Activated CD4-positive, alpha-beta T cell treated with anti-CD3 and anti-CD28 coated beads for 36 hours (primary cell): ENCODE measurements at regions of chr10 and their contacts with region 1.

Region 1: DNA sequence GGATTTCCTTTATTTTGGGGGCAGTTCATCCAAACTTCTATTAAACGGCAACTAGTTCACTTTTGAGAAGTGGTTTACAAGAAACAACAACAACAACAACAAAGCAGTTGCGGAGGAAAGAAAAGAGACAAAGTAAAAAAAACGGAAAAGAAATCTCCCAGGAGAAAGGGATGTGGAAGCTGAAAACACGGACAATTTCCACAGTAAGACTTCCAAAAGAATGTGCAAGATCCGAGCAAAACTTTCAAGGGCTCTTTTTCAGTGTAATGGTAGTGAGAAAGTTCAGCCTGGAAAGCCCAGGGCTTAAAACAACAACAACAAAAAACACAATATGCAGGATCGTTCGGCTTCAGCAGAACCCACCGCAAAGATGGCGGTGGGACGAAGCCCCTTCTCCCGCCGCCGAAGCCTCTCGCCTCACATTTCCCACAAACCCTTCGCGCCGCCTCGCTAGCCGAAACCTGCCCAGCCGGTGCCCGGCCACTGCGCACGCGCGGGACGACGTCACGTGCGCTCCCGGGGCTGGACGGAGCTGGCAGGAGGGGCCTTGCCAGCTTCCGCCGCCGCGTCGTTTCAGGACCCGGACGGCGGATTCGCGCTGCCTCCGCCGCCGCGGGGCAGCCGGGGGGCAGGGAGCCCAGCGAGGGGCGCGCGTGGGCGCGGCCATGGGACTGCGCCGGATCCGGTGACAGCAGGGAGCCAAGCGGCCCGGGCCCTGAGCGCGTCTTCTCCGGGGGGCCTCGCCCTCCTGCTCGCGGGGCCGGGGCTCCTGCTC is at the start of gene TNKS2:
- DNase-seq: peak; percentile 96
- ATAC-seq: peak; percentile 64
- H3K4me3 Mint-ChIP-seq: peak within 1 kb of the TSS; percentile 94
- H3K27ac Mint-ChIP-seq: peak within 1 kb of the TSS; percentile 99
- H3K4me1 Mint-ChIP-seq: peaks cover 50% of the 10 kb centered on the region
- H3K27me3 Mint-ChIP-seq: no peaks in the 10 kb centered on the region
- total RNA-seq, gene TNKS2: 32.0 to 35.7 TPM

Region 2: GRCh38 chr10:90179696-90180407 is 1618.2 kb before region 1 on chr10:
- CTCF ChIA-PET with region 1: no interaction called
- POLR2A ChIA-PET with region 1: no interaction called
- intact Hi-C with region 1: no loop called
- DNase-seq: no peak
- ATAC-seq: no peak
- H3K4me3 Mint-ChIP-seq: no peak overlapping the region
- H3K27ac Mint-ChIP-seq: no peak overlapping the region
- H3K4me1 Mint-ChIP-seq: no peaks in the 10 kb centered on the region
- H3K27me3 Mint-ChIP-seq: no peaks in the 10 kb centered on the region

Region 3: GRCh38 chr10:90905925-90906324 is 892.1 kb before region 1 on chr10:
- CTCF ChIA-PET with region 1: no interaction called
- POLR2A ChIA-PET with region 1: no interaction called
- intact Hi-C with region 1: loop called in 1 of 2 experiments (anchors 10 kb)
- DNase-seq: no peak
- ATAC-seq: peak; percentile 76
- H3K4me3 Mint-ChIP-seq: peak overlapping the region; percentile 1
- H3K27ac Mint-ChIP-seq: peak overlapping the region; percentile 91
- H3K4me1 Mint-ChIP-seq: peaks cover 17% of the 10 kb centered on the region
- H3K27me3 Mint-ChIP-seq: no peaks in the 10 kb centered on the region

Region 4: GRCh38 chr10:91220194-91220953 is 577.7 kb before region 1 on chr10 and contains the start of gene PCGF5:
- CTCF ChIA-PET with region 1: no interaction called
- POLR2A ChIA-PET with region 1: no interaction called
- intact Hi-C with region 1: loop called in 1 of 2 experiments (anchors 2 kb)
- DNase-seq: peak; percentile 94
- ATAC-seq: peak; percentile 99
- H3K4me3 Mint-ChIP-seq: peak within 1 kb of the TSS; percentile 84
- H3K27ac Mint-ChIP-seq: peak within 1 kb of the TSS; percentile 75
- H3K4me1 Mint-ChIP-seq: peaks cover 36% of the 10 kb centered on the region
- H3K27me3 Mint-ChIP-seq: no peaks in the 10 kb centered on the region
- total RNA-seq, gene PCGF5: 36.5 to 44.3 TPM

Region 5: GRCh38 chr10:91901784-91902677 is 104.0 kb after region 1 on chr10:
- CTCF ChIA-PET with region 1: no interaction called
- POLR2A ChIA-PET with region 1: no interaction called
- intact Hi-C with region 1: loop called in 1 of 2 experiments (anchors 1 kb)
- DNase-seq: peak; percentile 80
- ATAC-seq: peak; percentile 100
- H3K4me3 Mint-ChIP-seq: no peak overlapping the region
- H3K27ac Mint-ChIP-seq: peak overlapping the region; percentile 82
- H3K4me1 Mint-ChIP-seq: peaks cover 25% of the 10 kb centered on the region
- H3K27me3 Mint-ChIP-seq: no peaks in the 10 kb centered on the region

Region 6: GRCh38 chr10:91944880-91945630 is 147.0 kb after region 1 on chr10:
- CTCF ChIA-PET with region 1: no interaction called
- POLR2A ChIA-PET with region 1: no interaction called
- intact Hi-C with region 1: loop called (anchors 1 kb)
- DNase-seq: peak; percentile 36
- ATAC-seq: peak; percentile 98
- H3K4me3 Mint-ChIP-seq: no peak overlapping the region
- H3K27ac Mint-ChIP-seq: peak overlapping the region; percentile 77
- H3K4me1 Mint-ChIP-seq: peaks cover 24% of the 10 kb centered on the region
- H3K27me3 Mint-ChIP-seq: no peaks in the 10 kb centered on the region

Region 7: DNA sequence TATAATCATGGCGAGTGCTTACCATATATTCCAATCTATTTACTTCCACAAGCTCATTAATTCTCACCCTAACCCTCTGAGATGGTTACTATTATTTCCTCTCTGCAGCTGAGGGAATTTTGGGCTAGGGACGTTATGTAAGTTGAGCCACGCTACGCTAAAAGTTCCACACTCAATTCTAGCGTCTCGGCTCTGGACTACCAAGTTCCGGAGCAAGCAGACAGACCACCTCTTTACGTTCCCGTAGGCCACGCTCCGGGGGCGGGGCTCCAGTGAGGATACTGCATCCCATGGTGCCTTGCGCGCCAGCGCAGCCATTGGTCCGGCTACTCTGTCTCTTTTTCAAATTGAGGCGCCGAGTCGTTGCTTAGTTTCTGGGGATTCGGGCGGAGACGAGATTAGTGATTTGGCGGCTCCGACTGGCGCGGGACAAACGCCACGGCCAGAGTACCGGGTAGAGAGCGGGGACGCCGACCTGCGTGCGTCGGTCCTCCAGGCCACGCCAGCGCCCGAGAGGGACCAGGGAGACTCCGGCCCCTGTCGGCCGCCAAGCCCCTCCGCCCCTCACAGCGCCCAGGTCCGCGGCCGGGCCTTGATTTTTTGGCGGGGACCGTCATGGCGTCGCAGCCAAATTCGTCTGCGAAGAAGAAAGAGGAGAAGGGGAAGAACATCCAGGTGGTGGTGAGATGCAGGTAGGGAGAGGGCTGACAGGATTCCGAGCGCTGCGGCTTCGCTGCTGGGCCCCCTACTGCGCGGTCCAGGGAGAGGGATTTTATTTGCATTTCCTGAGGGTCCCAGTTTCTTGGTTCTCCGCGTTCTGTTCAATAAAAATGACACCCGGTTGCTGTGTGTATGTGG is 794.9 kb after region 1 on chr10 and contains the start of gene KIF11:
- CTCF ChIA-PET with region 1: no interaction called
- POLR2A ChIA-PET with region 1: no interaction called
- intact Hi-C with region 1: loop called (anchors 1 to 10 kb)
- DNase-seq: peak; percentile 99
- ATAC-seq: peak; percentile 84
- H3K4me3 Mint-ChIP-seq: peak within 1 kb of the TSS; percentile 94
- H3K27ac Mint-ChIP-seq: peak within 1 kb of the TSS; percentile 97
- H3K4me1 Mint-ChIP-seq: peaks cover 37% of the 10 kb centered on the region
- H3K27me3 Mint-ChIP-seq: no peaks in the 10 kb centered on the region
- total RNA-seq, gene KIF11: 59.1 to 59.3 TPM